CD4-positive, alpha-beta T cell (primary cell): ENCODE measurements at regions of chr19 and their contacts with region 1.

Region 1: DNA sequence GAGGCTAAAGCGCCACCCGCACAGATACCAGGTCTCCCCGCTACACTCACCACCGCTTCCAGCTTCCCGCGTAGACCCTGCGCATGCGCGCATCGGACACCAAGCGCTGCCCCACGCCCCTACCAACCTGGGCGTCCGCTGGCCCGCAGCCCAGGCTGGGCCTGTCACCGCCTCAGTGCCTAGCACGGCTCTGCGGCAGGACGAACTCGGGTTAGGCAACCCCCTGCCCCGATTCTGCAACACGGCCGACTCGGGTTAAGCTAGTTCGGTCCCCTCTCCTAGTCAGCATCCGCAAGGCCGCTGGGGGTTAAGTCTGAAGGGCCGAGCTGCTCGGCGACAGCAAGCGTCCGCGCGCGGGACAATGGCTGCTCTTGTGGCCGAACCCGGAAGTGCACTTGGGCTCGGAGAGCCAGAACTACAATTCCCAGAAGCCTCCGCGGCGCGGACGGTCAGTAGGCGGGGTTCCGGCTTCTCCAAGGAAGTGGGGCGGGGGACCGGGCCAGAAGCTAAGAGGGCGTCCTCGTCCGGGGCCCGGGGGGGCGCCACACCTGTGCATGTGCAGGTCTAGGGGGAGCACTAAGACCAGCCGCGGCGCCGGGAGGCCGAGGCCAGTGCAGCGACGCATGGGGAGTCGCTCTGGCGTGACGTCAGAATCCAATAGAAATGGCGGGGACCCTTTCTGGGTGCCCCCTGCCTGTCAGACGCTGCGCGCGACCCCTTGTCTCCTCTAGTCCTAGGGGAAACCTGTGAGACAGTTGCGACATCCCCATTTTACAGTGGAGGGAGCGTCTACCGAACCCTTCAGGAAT is at the start of gene ZNF180:
- DNase-seq: peak; percentile 89 to 98 (median 94)
- ATAC-seq: peak; percentile 91
- H3K4me3 ChIP-seq: peak within 1 kb of the TSS; percentile 88
- H3K4me3 Mint-ChIP-seq: peak within 1 kb of the TSS; percentile 95
- H3K27ac ChIP-seq: peak within 1 kb of the TSS; percentile 63 to 74
- H3K27ac Mint-ChIP-seq: peak within 1 kb of the TSS; percentile 79
- H3K4me1 ChIP-seq: peaks cover 26% of the 10 kb centered on the region
- H3K4me1 Mint-ChIP-seq: peaks cover 38% of the 10 kb centered on the region
- H3K27me3 ChIP-seq: peaks cover 1 to 5% of the 10 kb centered on the region in 2 experiments
- H3K27me3 Mint-ChIP-seq: peaks cover 17% of the 10 kb centered on the region
- CTCF ChIP-seq: peak; percentile 60
- total RNA-seq, gene ZNF180: 7.6 to 9.4 TPM

Region 2: DNA sequence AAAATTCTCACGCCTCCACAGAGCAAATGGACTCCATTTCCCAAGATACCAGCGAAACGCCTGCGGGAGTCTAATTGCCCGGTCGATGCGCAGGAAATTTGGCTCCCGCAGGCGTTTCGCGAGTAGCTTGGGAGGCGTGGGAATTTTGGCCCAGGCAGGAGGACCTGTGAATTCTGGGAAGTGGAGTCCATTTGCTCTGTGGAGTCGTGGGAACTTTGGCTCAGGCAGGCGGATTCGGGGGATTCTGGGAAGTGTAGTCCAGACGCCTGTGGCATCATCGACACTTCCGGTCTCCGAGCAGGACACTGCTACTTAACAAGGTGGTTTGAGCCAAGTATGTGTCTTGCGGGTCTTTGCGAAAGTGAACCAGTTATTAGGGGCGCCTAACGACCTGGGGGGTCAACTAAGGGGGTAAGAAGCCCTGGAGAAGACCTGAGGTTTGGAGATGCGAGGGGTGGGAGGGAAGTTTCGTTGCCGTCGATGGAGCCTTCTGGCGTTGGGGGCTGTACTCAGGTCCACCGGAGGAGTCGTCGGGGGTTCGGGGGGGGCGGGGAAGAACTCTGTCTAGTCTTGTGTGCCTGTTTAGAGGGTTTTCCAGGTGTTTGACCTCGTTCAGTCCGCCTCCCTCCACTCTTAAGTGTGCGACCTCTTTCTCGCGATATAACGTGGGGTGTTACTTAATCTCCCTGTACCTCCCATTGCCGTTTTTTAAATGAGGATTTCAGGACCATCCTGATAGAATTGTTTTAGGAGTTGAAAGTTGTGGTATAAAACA is 516.3 kb before region 1 on chr19 and contains the start of gene ZNF155:
- CTCF ChIA-PET with region 1: no interaction called
- POLR2A ChIA-PET with region 1: no interaction called
- intact Hi-C with region 1: loop called in 1 of 2 experiments (anchors 5 kb)
- DNase-seq: peak; percentile 39 to 88 (median 56)
- ATAC-seq: peak; percentile 88
- H3K4me3 ChIP-seq: peak within 1 kb of the TSS; percentile 85
- H3K4me3 Mint-ChIP-seq: peak within 1 kb of the TSS; percentile 97
- H3K27ac ChIP-seq: peak within 1 kb of the TSS in 1 of 2 donors; percentile 72
- H3K27ac Mint-ChIP-seq: peak within 1 kb of the TSS; percentile 83
- H3K4me1 ChIP-seq: peaks cover 16% of the 10 kb centered on the region
- H3K4me1 Mint-ChIP-seq: peaks cover 22% of the 10 kb centered on the region
- H3K27me3 ChIP-seq: no peaks in the 10 kb centered on the region
- H3K27me3 Mint-ChIP-seq: no peaks in the 10 kb centered on the region
- CTCF ChIP-seq: no peak
- total RNA-seq, gene ZNF155: 3.5 to 4.0 TPM

Region 3: DNA sequence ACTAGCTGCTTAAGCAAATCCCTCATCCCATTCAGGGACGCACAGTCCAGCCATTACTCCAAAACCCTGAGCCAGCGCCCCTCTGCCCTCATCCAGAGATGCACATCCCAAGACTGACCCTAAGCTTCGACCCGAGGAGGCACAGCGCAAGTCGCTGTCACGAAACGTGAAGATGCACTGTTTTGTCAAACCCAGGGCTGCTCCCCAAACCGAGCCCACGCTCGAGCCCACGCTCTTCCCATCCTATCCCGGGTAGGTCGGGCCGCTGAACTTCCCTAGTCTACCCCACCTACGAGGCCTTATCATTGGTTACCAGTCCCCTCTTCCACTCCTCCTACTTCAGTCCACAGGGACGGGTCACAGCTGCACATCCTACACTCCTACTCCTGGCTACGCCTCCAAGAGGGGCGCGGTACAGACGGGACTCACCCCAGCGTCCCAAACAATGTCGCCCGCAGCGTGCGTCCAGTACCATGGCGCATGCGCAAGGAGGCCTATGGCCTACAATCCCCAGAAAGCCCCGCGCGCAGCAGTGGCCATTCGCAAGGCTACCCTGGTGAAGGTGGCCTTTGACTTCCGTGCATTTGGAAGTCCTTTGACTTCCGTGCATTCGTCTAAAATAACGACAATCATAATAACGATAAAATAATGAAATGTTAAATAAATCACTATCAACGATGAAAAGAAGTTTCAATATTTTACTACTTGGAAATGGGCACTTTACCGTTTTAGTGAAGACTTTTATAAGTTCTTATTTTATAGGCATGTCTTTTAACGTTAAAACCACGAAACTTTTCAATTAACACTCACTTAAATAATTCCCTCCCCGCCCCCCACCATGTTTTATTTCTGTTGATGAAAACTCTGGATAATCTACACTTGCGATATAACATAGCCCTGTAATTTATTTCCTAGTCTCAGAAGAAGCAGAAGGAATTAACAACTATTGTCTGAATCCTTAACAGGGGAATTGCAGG is 98.9 kb before region 1 on chr19 and contains the start of gene ZNF285:
- CTCF ChIA-PET with region 1: no interaction called
- POLR2A ChIA-PET with region 1: no interaction called
- intact Hi-C with region 1: loop called in 1 of 2 experiments (anchors 5 kb)
- DNase-seq: peak; percentile 30 to 84 (median 60)
- ATAC-seq: peak; percentile 86
- H3K4me3 ChIP-seq: peak within 1 kb of the TSS; percentile 59
- H3K4me3 Mint-ChIP-seq: peak within 1 kb of the TSS; percentile 93
- H3K27ac ChIP-seq: no peak within 1 kb of the TSS
- H3K27ac Mint-ChIP-seq: no peak within 1 kb of the TSS
- H3K4me1 ChIP-seq: peaks cover 8% of the 10 kb centered on the region
- H3K4me1 Mint-ChIP-seq: peaks cover 11% of the 10 kb centered on the region
- H3K27me3 ChIP-seq: no peaks in the 10 kb centered on the region
- H3K27me3 Mint-ChIP-seq: peaks cover 5% of the 10 kb centered on the region
- CTCF ChIP-seq: no peak
- total RNA-seq, gene ZNF285: 0.16 to 0.22 TPM